A549 (cell line): ENCODE measurements at regions of chr15 and their contacts with region 1.

Region 1: DNA sequence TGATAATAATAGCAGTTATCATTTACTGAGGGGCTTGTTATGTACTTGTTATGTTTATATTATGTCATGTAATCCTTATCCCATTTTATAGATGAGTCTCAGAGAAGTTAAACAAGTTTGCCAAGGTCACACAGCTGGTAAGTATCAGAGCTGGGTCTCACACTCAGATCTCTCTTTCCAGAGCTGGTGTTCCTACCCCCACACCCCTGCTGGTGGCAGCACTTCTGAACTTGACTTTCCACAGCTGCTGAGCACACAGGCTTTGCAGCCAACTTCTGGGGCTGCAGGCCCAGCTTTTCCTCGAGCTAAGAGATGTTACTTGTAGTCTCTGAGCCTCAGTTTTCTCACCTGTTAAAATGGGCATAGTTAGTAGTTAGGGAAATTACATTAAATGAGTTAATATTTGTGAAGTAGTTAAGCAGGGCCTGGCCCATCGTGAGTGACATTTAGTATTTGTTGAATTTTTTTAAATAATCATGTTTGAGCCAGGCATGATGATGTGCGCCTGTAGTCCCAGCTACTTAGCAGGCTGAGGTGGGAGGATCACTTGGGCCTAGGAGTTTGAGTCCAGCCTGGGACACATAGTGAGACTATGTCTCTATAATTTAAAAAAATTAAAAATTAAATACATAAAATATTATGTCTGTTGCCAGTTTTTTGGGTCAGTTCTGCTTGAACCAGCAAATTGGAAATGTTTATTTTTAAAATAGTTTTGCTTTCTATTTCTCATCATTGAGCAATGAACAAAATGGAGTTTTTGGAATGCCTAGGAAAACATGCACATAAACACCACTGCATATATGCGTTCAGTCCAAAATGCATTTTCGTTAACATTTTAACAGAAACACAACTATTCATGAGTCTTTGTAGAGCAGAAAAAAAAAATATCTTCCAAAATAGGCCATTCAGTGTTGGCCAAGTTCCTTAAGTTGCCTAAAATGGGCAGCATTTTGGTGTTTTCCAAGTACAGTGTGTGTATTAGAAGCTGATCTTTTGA is 87.3 kb downstream of the SMAD6 start:
- DNase-seq: peak in 1 of 2 experiments; percentile 77
- ATAC-seq: peak; percentile 83
- H3K4me3 ChIP-seq: no peak overlapping the region
- H3K27ac ChIP-seq: 0 out of 6 replicates have a peak overlapping the region, but pooled peaks of 1 of the 2 experiments have one; percentile 6
- H3K4me1 ChIP-seq: peaks cover 19% of the 10 kb centered on the region; the same call in 2 of the 3 replicates
- CTCF ChIP-seq: peak; percentile 66
- EP300 ChIP-seq: no peak
- POLR2A ChIP-seq: no peak
- RAD21 ChIP-seq: peak; percentile 72 to 73

Region 2: DNA sequence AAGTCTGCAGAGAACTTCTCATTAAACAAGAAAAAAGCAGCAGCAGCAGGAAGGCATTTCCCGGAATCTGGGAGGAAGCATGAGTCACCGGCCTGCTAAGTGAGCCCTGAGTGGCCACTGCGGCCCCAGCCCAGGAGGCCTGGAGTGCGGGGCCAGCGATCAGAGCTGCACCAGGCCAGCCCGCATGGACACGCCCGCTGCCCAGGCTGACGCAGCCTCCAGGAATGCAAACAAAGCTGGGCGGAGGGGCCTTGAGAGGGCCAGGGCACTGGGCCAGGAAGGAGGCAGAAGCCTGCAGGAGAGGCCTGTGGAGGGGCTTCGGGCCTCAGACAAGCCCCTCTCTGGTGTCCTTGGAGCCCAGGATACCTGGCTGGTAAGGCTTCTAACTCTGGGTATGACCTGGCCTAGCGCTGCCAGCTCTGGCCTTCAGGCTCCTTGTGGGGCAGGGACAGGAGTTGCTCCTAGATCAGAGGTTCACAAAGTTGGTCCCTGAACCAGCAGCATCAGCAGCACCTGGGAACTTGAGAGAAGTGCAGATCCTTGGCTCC is 13.9 kb after region 1 on chr15:
- CTCF ChIA-PET with region 1: interaction called, 29 read pairs
- POLR2A ChIA-PET with region 1: no interaction called
- DNase-seq: peak; percentile 95 to 98
- ATAC-seq: peak; percentile 97 to 99
- H3K4me3 ChIP-seq: no peak overlapping the region
- H3K27ac ChIP-seq: peak overlapping the region; percentile 83 to 93
- H3K4me1 ChIP-seq: peaks cover 58% of the 10 kb centered on the region
- CTCF ChIP-seq: no peak
- EP300 ChIP-seq: peak; percentile 13 to 65; a peak in 2 of 5 replicates
- POLR2A ChIP-seq: peak; percentile 21; the same call in 1 of the 2 replicates
- RAD21 ChIP-seq: peak in 1 of 2 experiments; percentile 33; a peak in 2 of 5 replicates

Region 3: GRCh38 chr15:66820481-66821176 is 31.3 kb after region 1 on chr15:
- CTCF ChIA-PET with region 1: interaction called, 10 read pairs
- POLR2A ChIA-PET with region 1: no interaction called
- DNase-seq: no peak
- ATAC-seq: no peak
- H3K4me3 ChIP-seq: no peak overlapping the region
- H3K27ac ChIP-seq: peak overlapping the region in 1 of 2 experiments; percentile 35; a peak in 1 of 6 replicates
- H3K4me1 ChIP-seq: peaks cover 16% of the 10 kb centered on the region
- CTCF ChIP-seq: no peak
- EP300 ChIP-seq: no peak
- POLR2A ChIP-seq: no peak
- RAD21 ChIP-seq: no peak

Region 4: GRCh38 chr15:66835321-66835878 is 46.1 kb after region 1 on chr15:
- CTCF ChIA-PET with region 1: interaction called, 11 read pairs
- POLR2A ChIA-PET with region 1: no interaction called
- DNase-seq: no peak
- ATAC-seq: no peak
- H3K4me3 ChIP-seq: no peak overlapping the region
- H3K27ac ChIP-seq: peak overlapping the region in 1 of 2 experiments; percentile 7; a peak in 1 of 6 replicates
- H3K4me1 ChIP-seq: peaks cover 11% of the 10 kb centered on the region
- CTCF ChIP-seq: no peak
- EP300 ChIP-seq: no peak
- POLR2A ChIP-seq: no peak
- RAD21 ChIP-seq: no peak

Region 5: DNA sequence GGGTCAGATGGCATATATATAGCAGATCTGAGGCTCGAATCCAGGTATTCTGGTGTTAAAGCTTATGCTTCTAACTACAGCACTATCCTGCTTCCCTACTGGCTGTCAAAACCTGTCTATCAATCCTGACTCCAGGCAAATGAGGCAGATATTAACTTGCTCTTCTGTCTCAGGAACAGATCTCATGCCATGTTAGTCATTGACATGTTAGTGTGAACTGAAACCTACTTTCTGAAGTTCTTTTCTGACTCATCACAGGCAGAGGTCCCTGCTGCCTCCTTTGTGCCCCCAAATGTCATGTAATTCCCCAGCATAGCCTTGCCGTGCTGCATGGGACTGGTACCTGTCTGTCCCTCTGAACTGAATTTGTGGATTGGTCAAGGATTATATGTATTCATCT is 151.0 kb after region 1 on chr15:
- CTCF ChIA-PET with region 1: no interaction called
- POLR2A ChIA-PET with region 1: no interaction called
- DNase-seq: no peak
- ATAC-seq: peak; percentile 19 to 30; a peak in 4 of 6 replicates
- H3K4me3 ChIP-seq: no peak overlapping the region
- H3K27ac ChIP-seq: peak overlapping the region; percentile 2 to 64; a peak in 4 of 6 replicates
- H3K4me1 ChIP-seq: peaks cover 27% of the 10 kb centered on the region
- CTCF ChIP-seq: no peak
- EP300 ChIP-seq: no peak
- POLR2A ChIP-seq: no peak
- RAD21 ChIP-seq: no peak